KBM-7 (cell line): ENCODE measurements at regions of chr9 and their contacts with region 1.

Region 1: DNA sequence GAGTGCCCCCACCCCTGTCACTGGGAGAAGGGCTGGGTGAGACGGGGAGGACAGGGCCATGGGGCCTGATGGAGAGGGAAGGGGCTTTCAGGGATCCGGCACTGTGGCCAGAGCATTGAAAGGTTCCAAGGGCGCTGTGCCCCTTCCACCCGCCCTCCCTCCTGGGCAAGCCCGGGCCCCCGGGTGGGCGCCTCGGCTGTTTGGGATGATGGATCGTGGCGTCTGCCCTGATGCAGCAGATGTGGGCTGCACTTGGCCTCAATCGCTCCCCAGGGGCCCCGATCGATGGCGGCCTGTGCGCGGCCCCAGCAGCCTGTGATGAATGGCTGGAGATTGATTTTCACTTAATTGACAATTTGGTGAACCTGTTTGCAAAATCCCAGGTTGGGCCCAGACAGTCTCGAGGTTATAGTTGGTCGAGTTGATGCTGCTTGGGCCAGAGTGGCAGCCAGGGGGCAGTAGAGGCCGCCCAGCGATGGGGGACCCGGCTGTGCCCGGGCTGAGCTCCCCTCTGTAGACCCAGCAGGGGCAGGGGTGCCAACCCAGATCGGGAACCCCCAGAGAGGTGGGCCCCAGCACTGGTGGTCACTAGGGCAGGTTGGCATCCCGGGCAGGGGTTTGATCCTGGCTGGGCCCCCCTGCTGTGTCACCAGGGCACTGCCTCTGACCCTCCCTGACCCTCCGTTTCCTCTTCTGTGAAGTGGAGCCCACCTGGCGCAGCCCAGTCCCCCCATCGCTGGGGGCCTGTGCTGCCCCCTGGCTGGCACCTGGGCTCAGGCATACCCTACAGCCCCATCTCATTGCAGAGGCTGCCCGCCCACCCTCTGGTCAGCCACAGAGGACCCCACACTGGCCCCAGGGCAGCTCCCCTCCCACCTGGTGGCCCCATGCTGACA is 34.7 kb downstream of the LHX3 start:
- DNase-seq: peak; percentile 47

Region 2: DNA sequence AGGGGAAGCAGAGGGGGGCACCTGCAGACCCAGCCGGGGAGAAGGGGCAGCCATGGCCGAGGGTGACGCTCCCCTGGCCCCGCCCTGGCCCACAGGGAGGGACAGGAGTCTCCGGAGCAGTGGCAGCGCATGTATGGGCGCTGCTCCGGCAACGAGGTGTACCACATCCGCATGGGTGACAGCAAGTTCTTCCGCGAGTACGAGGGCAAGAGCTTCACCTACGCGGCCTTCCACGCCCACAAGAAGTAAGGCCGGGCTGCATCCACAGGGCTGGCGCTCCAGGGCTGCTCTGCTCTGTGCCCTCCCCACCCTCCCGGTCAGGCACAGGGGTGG is 400.1 kb before region 1 on chr9:
- in situ Hi-C with region 1: no loop called
- DNase-seq: no peak

Region 3: GRCh38 chr9:136275655-136276429 is 105.6 kb after region 1 on chr9:
- in situ Hi-C with region 1: loop called (anchors 10 kb)
- DNase-seq: no peak

Region 4: DNA sequence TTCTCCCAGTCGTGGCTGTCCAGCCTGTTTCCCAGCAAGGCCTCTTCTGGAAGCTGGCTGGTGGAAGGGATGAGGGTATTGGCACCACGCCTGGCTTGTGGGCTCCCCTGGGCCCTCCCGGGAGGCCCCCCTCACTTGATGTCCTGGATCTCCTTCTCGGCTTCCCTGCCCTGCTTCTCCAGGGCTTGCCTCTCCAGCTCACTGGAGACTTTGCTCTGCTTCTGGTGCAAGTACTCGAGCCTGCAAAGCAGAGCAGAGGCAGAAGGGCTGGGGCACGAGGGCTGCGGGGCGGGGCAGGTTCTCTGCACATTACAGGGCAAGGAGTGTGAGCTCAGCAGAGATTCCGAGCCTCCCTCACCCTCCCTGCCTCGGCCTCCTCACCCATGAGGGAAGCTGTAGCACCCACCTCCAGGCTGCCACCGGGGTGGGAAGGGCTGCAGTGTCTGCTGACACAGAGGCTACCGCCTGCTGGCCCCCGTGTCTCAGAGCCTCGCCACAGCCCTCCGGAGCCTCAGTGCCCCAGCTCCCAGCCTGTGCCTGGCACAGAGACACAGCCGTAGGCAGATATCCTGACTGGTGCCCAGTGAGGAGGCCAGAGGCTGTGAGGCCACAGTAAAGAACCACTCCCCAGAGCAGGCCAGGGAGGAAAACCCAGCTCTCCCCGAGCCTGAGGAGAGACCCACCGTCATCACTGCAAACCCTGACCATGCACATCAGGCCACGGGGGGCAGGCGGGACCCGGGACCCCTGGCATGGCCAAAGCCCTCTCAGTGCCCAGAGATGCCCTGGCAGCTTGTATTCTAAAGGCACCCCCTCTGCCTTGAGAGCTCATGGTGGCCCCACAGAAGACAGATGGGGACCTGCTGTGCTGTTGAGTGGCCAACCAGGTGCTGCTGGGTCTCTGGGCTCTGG is 222.5 kb after region 1 on chr9:
- in situ Hi-C with region 1: no loop called
- DNase-seq: no peak